ENCODE measurements at regions of chr10 and their contacts with region 1.

Region 1: GRCh38 chr10:95552679-95553342 is 8.4 kb downstream of the SORBS1 start:
- DNase-seq: peak; percentile 78
- ATAC-seq: peak; percentile 76
- H3K4me3 ChIP-seq: no peak overlapping the region
- H3K27ac ChIP-seq: peak overlapping the region; percentile 39
- H3K4me1 ChIP-seq: peaks cover 93% of the 10 kb centered on the region
- H3K27me3 ChIP-seq: no peaks in the 10 kb centered on the region
- CTCF ChIP-seq: no peak
- EP300 ChIP-seq: peak in 1 of 2 experiments; percentile 46; a peak in 2 of 4 replicates
- POLR2A ChIP-seq: no peak
- RAD21 ChIP-seq: no peak

Region 2: GRCh38 chr10:95539560-95540284 is 13.1 kb before region 1 on chr10:
- CTCF ChIA-PET with region 1: no interaction called
- POLR2A ChIA-PET with region 1: interaction called, 9 read pairs
- in situ Hi-C with region 1: no loop called
- intact Hi-C with region 1: loop called (anchors 2 kb)
- DNase-seq: peak; percentile 97
- ATAC-seq: peak; percentile 93
- H3K4me3 ChIP-seq: peak overlapping the region in 2 of 3 experiments; percentile 37 to 49; a peak in 4 of 6 replicates
- H3K27ac ChIP-seq: peak overlapping the region; percentile 92
- H3K4me1 ChIP-seq: peaks cover 90% of the 10 kb centered on the region
- H3K27me3 ChIP-seq: no peaks in the 10 kb centered on the region
- CTCF ChIP-seq: no peak
- EP300 ChIP-seq: peak in 1 of 2 experiments; percentile 93; a peak in 2 of 4 replicates
- POLR2A ChIP-seq: no peak
- RAD21 ChIP-seq: no peak